ENCODE measurements at regions of chr9 and their contacts with region 1.

Region 1: GRCh38 chr9:78369639-78370219 is 72.8 kb downstream of the PSAT1 start:
- DNase-seq: peak; percentile 67
- H3K4me3 ChIP-seq: no peak overlapping the region
- H3K27ac ChIP-seq: no peak overlapping the region
- H3K4me1 ChIP-seq: peaks cover 4% of the 10 kb centered on the region
- H3K27me3 ChIP-seq: peaks cover 14% of the 10 kb centered on the region in 2 experiments
- CTCF ChIP-seq: peak; percentile 90
- POLR2A ChIP-seq: no peak

Region 2: GRCh38 chr9:78130004-78130403 is 239.7 kb before region 1 on chr9:
- CTCF ChIA-PET with region 1: interaction called, 6 read pairs
- POLR2A ChIA-PET with region 1: no interaction called
- dilution Hi-C with region 1: no loop called
- intact Hi-C with region 1: loop called (anchors 5 kb)
- DNase-seq: peak; percentile 87
- H3K4me3 ChIP-seq: no peak overlapping the region
- H3K27ac ChIP-seq: no peak overlapping the region
- H3K4me1 ChIP-seq: peaks cover 11% of the 10 kb centered on the region
- H3K27me3 ChIP-seq: no peaks in the 10 kb centered on the region
- CTCF ChIP-seq: peak; percentile 36 to 55
- POLR2A ChIP-seq: no peak

Region 3: DNA sequence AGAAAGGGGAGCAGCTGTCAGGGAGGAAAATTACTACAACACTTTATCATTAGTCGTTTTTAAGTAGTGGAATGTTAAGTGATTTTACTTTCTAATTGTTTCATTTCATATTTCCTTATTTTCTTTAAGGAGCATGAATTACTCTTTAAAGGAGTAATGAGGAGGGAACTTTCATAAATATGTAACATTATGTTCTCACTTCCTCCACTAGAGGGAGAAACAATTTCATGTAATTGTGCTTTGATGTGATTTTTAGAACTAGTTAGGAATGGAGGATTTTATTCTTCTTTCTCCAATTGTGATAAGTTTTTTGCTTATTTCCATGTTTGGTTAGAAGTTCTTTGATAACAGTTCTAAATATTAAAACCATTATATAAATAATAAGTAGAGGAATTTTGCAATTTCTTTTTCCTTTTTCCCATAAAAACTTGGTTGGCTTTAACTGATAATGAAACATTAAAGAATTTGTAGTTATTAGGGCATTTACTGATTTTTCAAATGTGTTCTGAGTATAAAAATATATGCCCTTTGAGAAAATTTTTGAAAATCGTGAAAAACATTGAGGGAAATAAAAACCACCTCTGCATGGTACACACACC is 108.2 kb before region 1 on chr9:
- CTCF ChIA-PET with region 1: interaction called, 12 read pairs
- POLR2A ChIA-PET with region 1: no interaction called
- dilution Hi-C with region 1: no loop called
- intact Hi-C with region 1: loop called (anchors 1 kb)
- DNase-seq: peak; percentile 39
- H3K4me3 ChIP-seq: no peak overlapping the region
- H3K27ac ChIP-seq: no peak overlapping the region
- H3K4me1 ChIP-seq: no peaks in the 10 kb centered on the region
- H3K27me3 ChIP-seq: no peaks in the 10 kb centered on the region
- CTCF ChIP-seq: peak in 1 of 2 donors; percentile 21
- POLR2A ChIP-seq: no peak

Region 4: DNA sequence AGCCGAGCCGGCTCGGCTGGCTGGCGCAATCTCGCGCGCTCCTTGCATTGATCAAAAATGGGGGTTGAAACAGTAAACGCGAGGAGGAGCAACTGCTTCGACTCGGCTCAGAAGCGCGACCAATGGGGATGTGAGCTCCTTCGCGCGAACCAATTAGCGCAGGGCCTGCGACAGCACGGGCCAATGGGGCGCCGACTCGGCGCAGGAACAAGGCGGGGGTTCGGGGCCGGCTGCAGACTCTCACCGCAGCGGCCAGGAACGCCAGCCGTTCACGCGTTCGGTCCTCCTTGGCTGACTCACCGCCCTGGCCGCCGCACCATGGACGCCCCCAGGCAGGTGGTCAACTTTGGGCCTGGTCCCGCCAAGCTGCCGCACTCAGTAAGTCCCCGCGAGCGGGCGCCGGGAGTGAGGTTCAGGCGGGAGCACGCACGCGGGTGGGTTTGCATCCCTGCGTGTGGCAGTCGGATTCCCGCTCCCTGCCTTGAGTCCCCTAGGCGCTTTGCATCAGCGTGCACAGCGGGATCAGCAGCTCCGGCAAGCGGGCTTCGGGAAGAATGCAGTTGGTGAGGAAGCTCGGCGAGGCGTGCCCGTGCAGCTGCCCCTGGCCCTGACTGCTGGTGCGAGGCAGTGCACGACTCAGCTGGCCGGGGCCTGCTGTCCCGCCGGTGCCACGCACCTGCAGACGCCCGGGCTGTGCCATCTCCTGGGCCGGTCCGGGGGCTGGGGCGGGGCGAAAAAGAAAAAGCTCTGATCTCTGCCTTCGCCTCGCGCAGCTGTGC is 72.6 kb before region 1 on chr9 and contains the start of gene PSAT1:
- CTCF ChIA-PET with region 1: interaction called, 13 read pairs
- POLR2A ChIA-PET with region 1: no interaction called
- dilution Hi-C with region 1: no loop called
- intact Hi-C with region 1: loop called (anchors 1 kb)
- DNase-seq: peak; percentile 96
- H3K4me3 ChIP-seq: peak within 1 kb of the TSS; percentile 64 to 81 (median 72)
- H3K27ac ChIP-seq: peak within 1 kb of the TSS; percentile 31
- H3K4me1 ChIP-seq: peaks cover 3% of the 10 kb centered on the region
- H3K27me3 ChIP-seq: no peaks in the 10 kb centered on the region
- CTCF ChIP-seq: peak in 1 of 2 donors; percentile 5
- POLR2A ChIP-seq: peak; percentile 66
- total RNA-seq, gene PSAT1: 42.0 and 47.3 TPM in 2 replicates

Region 5: GRCh38 chr9:78351816-78352215 is 17.9 kb before region 1 on chr9:
- CTCF ChIA-PET with region 1: interaction called, 13 read pairs
- POLR2A ChIA-PET with region 1: no interaction called
- dilution Hi-C with region 1: no loop called
- intact Hi-C with region 1: no loop called
- DNase-seq: no peak
- H3K4me3 ChIP-seq: no peak overlapping the region
- H3K27ac ChIP-seq: no peak overlapping the region
- H3K4me1 ChIP-seq: no peaks in the 10 kb centered on the region
- H3K27me3 ChIP-seq: no peaks in the 10 kb centered on the region
- CTCF ChIP-seq: no peak
- POLR2A ChIP-seq: no peak

Region 6: GRCh38 chr9:78383130-78383529 is 13.4 kb after region 1 on chr9:
- CTCF ChIA-PET with region 1: interaction called, 12 read pairs
- POLR2A ChIA-PET with region 1: no interaction called
- dilution Hi-C with region 1: no loop called
- intact Hi-C with region 1: no loop called
- DNase-seq: no peak
- H3K4me3 ChIP-seq: no peak overlapping the region
- H3K27ac ChIP-seq: no peak overlapping the region
- H3K4me1 ChIP-seq: no peaks in the 10 kb centered on the region
- H3K27me3 ChIP-seq: peaks cover 0 to 3% of the 10 kb centered on the region in 2 experiments
- CTCF ChIP-seq: no peak
- POLR2A ChIP-seq: no peak

Region 7: GRCh38 chr9:78592811-78593210 is 223.1 kb after region 1 on chr9:
- CTCF ChIA-PET with region 1: no interaction called
- POLR2A ChIA-PET with region 1: no interaction called
- dilution Hi-C with region 1: no loop called
- intact Hi-C with region 1: no loop called
- DNase-seq: no peak
- H3K4me3 ChIP-seq: no peak overlapping the region
- H3K27ac ChIP-seq: no peak overlapping the region
- H3K4me1 ChIP-seq: no peaks in the 10 kb centered on the region
- H3K27me3 ChIP-seq: peaks cover under 1 to 4% of the 10 kb centered on the region in 2 experiments
- CTCF ChIP-seq: no peak
- POLR2A ChIP-seq: no peak